ENCODE measurements at regions of chr7 and their contacts with region 1.

Region 1: DNA sequence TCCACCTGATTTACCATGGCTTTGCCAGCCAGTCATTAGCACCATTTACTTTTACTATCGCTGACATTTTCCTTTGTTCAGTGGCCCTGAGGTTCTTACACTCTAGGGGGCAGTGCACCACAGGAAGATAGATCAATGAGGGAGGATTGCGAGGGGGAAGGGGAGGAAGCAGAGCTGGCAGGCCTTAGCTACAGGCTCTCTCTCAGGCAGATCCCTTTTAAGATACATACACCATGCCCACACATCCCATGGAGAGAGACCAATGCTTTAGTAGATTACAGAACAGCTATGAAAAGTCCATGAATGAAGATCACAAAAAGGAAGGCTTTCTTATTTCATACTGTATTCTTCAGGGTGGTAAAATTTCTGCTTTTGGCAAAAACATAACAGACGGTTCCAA is 47.4 kb downstream of the DENND11 start:
- DNase-seq: peak; percentile 23
- ATAC-seq: peak; percentile 87
- H3K4me3 ChIP-seq: no peak overlapping the region
- H3K27ac ChIP-seq: no peak overlapping the region
- H3K4me1 ChIP-seq: peaks cover 3% of the 10 kb centered on the region
- H3K27me3 ChIP-seq: no peaks in the 10 kb centered on the region
- CTCF ChIP-seq: peak; percentile 75 to 83 (median 79)
- EP300 ChIP-seq: no peak
- POLR2A ChIP-seq: no peak
- RAD21 ChIP-seq: peak; percentile 94

Region 2: GRCh38 chr7:141251957-141252356 is 402.6 kb before region 1 on chr7:
- CTCF ChIA-PET with region 1: interaction called, 4 read pairs
- POLR2A ChIA-PET with region 1: no interaction called
- RAD21 ChIA-PET with region 1: no interaction called
- SMC1A ChIA-PET with region 1: no interaction called
- in situ Hi-C with region 1: no loop called
- intact Hi-C with region 1: loop called (anchors 10 kb)
- DNase-seq: no peak
- ATAC-seq: no peak
- H3K4me3 ChIP-seq: no peak overlapping the region
- H3K27ac ChIP-seq: no peak overlapping the region
- H3K4me1 ChIP-seq: no peaks in the 10 kb centered on the region
- H3K27me3 ChIP-seq: no peaks in the 10 kb centered on the region
- CTCF ChIP-seq: no peak
- EP300 ChIP-seq: no peak
- POLR2A ChIP-seq: no peak
- RAD21 ChIP-seq: no peak

Region 3: DNA sequence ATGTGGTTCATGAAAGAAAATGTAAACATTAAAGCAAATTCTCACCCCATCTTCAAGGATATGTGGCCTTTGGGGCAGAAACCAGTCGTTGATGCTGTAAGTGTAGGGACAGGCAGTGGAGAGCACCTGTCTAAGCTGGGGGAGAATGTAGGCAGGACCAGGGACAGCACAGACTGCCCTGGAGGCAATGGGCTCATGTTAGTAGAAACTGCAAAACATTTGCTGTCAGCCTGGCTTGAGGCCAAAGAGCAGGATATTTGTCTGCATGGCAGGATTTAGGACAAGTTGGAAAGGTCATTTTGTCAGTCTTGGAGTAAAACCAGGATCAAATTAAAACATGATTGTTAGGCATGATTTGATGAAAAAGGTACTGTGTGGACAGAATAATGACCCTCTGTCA is 314.9 kb before region 1 on chr7:
- CTCF ChIA-PET with region 1: no interaction called
- POLR2A ChIA-PET with region 1: no interaction called
- RAD21 ChIA-PET with region 1: no interaction called
- SMC1A ChIA-PET with region 1: no interaction called
- in situ Hi-C with region 1: no loop called
- intact Hi-C with region 1: no loop called
- DNase-seq: no peak
- ATAC-seq: no peak
- H3K4me3 ChIP-seq: no peak overlapping the region
- H3K27ac ChIP-seq: no peak overlapping the region
- H3K4me1 ChIP-seq: no peaks in the 10 kb centered on the region
- H3K27me3 ChIP-seq: no peaks in the 10 kb centered on the region
- CTCF ChIP-seq: no peak
- EP300 ChIP-seq: no peak
- POLR2A ChIP-seq: no peak
- RAD21 ChIP-seq: no peak

Region 4: DNA sequence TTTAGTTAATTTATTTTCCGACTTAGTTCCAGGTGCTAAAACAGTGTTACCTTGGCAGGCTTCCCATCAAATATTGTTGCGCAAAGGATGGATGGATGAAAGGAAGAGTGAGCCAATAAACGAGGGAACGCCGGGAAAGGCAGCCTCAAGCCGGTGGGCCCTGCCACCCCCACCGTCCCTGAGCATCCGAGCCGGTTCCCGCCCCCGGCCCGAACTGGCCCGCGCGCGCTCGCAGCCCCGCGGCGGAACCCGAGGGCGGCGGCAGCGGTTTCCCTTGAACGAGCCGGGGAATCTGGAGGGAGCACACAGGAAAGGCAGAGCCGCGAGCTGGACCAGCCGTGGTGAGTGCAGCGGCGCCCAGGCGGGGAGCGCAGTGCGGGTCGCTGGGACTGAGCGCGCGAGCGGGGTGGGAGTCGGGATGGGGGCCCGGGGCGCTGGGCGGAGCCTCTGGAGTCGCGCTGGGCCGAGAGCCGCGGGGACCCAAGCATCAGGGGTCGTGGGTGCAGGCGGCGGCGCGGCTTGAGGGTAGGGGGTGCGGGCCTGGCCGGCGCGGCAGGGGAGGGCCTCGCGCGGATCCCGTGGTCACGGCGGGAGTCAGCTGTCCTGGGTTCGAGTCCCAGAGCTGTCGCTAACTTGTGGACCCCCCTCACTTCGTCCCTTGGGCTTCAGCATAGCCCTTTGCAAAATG is 103.3 kb before region 1 on chr7 and contains the start of gene AGK:
- CTCF ChIA-PET with region 1: interaction called, 6 read pairs
- POLR2A ChIA-PET with region 1: interaction called, 3 read pairs
- RAD21 ChIA-PET with region 1: interaction called, 3 read pairs
- SMC1A ChIA-PET with region 1: interaction called, 23 read pairs
- in situ Hi-C with region 1: no loop called
- intact Hi-C with region 1: no loop called
- DNase-seq: no peak
- ATAC-seq: peak; percentile 96
- H3K4me3 ChIP-seq: peak within 1 kb of the TSS; percentile 84
- H3K27ac ChIP-seq: peak within 1 kb of the TSS; percentile 84
- H3K4me1 ChIP-seq: peaks cover 8% of the 10 kb centered on the region
- H3K27me3 ChIP-seq: no peaks in the 10 kb centered on the region
- CTCF ChIP-seq: no peak
- EP300 ChIP-seq: no peak
- POLR2A ChIP-seq: peak; percentile 97
- RAD21 ChIP-seq: no peak
- polyA plus RNA-seq, gene AGK: 32.5 to 34.1 TPM

Region 5: GRCh38 chr7:141634065-141634464 is 20.5 kb before region 1 on chr7:
- CTCF ChIA-PET with region 1: interaction called, 12 read pairs
- POLR2A ChIA-PET with region 1: no interaction called
- RAD21 ChIA-PET with region 1: no interaction called
- SMC1A ChIA-PET with region 1: interaction called, 13 read pairs
- in situ Hi-C with region 1: no loop called
- intact Hi-C with region 1: no loop called
- DNase-seq: no peak
- ATAC-seq: no peak
- H3K4me3 ChIP-seq: no peak overlapping the region
- H3K27ac ChIP-seq: no peak overlapping the region
- H3K4me1 ChIP-seq: no peaks in the 10 kb centered on the region
- H3K27me3 ChIP-seq: no peaks in the 10 kb centered on the region
- CTCF ChIP-seq: no peak
- EP300 ChIP-seq: no peak
- POLR2A ChIP-seq: no peak
- RAD21 ChIP-seq: no peak

Region 6: GRCh38 chr7:141701489-141702046 is 47.0 kb after region 1 on chr7:
- CTCF ChIA-PET with region 1: interaction called, 32 read pairs
- POLR2A ChIA-PET with region 1: interaction called, 4 read pairs
- RAD21 ChIA-PET with region 1: interaction called, 16 read pairs
- SMC1A ChIA-PET with region 1: interaction called, 9 read pairs
- in situ Hi-C with region 1: no loop called
- intact Hi-C with region 1: no loop called
- DNase-seq: peak; percentile 20
- ATAC-seq: peak; percentile 91
- H3K4me3 ChIP-seq: peak overlapping the region; percentile 76; the same call in 1 of the 2 replicates
- H3K27ac ChIP-seq: peak overlapping the region; percentile 49
- H3K4me1 ChIP-seq: peaks cover 4% of the 10 kb centered on the region; the same call in 1 of the 2 replicates
- H3K27me3 ChIP-seq: peaks cover 0 to 2% of the 10 kb centered on the region in 2 experiments; a peak in 1 of 4 replicates
- CTCF ChIP-seq: no peak
- EP300 ChIP-seq: no peak
- POLR2A ChIP-seq: peak; percentile 74
- RAD21 ChIP-seq: no peak

Region 7: GRCh38 chr7:141731476-141732149 is 77.1 kb after region 1 on chr7:
- CTCF ChIA-PET with region 1: interaction called, 121 read pairs
- POLR2A ChIA-PET with region 1: no interaction called
- RAD21 ChIA-PET with region 1: interaction called, 33 read pairs
- SMC1A ChIA-PET with region 1: interaction called, 35 read pairs
- in situ Hi-C with region 1: no loop called
- intact Hi-C with region 1: no loop called
- DNase-seq: no peak
- ATAC-seq: no peak
- H3K4me3 ChIP-seq: no peak overlapping the region
- H3K27ac ChIP-seq: no peak overlapping the region
- H3K4me1 ChIP-seq: no peaks in the 10 kb centered on the region
- H3K27me3 ChIP-seq: no peaks in the 10 kb centered on the region; a peak in 1 of 4 replicates
- CTCF ChIP-seq: no peak
- EP300 ChIP-seq: no peak
- POLR2A ChIP-seq: no peak
- RAD21 ChIP-seq: no peak

Region 8: DNA sequence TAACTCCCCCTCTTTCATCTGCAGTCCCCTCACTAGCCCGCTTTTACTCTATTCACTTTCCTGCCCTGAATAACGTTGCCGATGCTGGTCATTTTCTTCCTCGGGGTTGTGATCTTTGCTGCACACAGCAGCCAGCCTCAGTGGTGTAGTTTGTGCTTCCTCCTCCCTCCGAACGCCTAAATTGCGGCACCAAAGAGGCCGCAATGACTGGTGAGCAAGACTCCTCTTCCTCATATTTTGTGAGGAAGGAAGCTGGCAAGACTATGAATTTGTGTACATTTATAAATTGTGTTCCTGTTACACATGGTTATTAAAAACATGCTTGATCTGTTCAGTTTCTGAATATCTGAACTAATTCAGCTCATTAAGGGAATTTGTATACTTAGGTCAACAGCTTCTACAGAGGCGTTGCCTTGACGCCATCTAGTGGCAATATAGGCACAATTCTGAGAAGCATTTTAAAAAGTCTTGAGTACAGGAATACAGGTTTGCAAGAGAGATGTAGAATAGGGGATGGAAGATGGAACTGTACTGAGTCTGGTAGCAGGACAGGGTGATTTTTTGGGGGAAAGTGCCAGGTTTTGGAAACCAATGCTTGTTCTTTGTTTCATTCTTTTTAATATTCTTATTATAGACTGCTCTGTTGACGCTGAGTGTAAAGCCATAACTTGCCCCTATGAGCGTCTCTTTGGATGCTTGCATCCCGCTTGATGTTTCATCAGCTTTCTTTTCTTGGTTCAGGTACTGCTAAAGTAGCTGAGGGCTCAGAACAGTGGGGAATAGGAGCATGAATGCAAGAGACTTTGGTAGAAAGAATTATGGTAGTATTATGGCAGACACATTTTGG is 131.4 kb after region 1 on chr7:
- CTCF ChIA-PET with region 1: interaction called, 108 read pairs
- POLR2A ChIA-PET with region 1: no interaction called
- RAD21 ChIA-PET with region 1: interaction called, 11 read pairs
- SMC1A ChIA-PET with region 1: interaction called, 36 read pairs
- in situ Hi-C with region 1: no loop called
- intact Hi-C with region 1: loop called (anchors 1 kb)
- DNase-seq: peak; percentile 8
- ATAC-seq: peak; percentile 92
- H3K4me3 ChIP-seq: no peak overlapping the region
- H3K27ac ChIP-seq: no peak overlapping the region
- H3K4me1 ChIP-seq: no peaks in the 10 kb centered on the region
- H3K27me3 ChIP-seq: no peaks in the 10 kb centered on the region
- CTCF ChIP-seq: peak; percentile 66 to 87 (median 76)
- EP300 ChIP-seq: no peak
- POLR2A ChIP-seq: no peak
- RAD21 ChIP-seq: peak; percentile 78

Region 9: GRCh38 chr7:141837683-141838082 is 183.1 kb after region 1 on chr7:
- CTCF ChIA-PET with region 1: no interaction called
- POLR2A ChIA-PET with region 1: no interaction called
- RAD21 ChIA-PET with region 1: no interaction called
- SMC1A ChIA-PET with region 1: no interaction called
- in situ Hi-C with region 1: no loop called
- intact Hi-C with region 1: no loop called
- DNase-seq: no peak
- ATAC-seq: no peak
- H3K4me3 ChIP-seq: no peak overlapping the region
- H3K27ac ChIP-seq: no peak overlapping the region
- H3K4me1 ChIP-seq: no peaks in the 10 kb centered on the region
- H3K27me3 ChIP-seq: no peaks in the 10 kb centered on the region
- CTCF ChIP-seq: no peak
- EP300 ChIP-seq: no peak
- POLR2A ChIP-seq: no peak
- RAD21 ChIP-seq: no peak